MCF 10A (cell line): ENCODE measurements at regions of chr19 and their contacts with region 1.

Region 1: GRCh38 chr19:18865973-18866799 is 29.8 kb downstream of the CERS1 start:
- DNase-seq: peak; percentile 70
- H3K4me3 Mint-ChIP-seq: no peak overlapping the region
- H3K27ac Mint-ChIP-seq: no peak overlapping the region
- H3K4me1 Mint-ChIP-seq: no peaks in the 10 kb centered on the region
- H3K27me3 Mint-ChIP-seq: no peaks in the 10 kb centered on the region
- CTCF ChIP-seq: peak; percentile 97

Region 2: GRCh38 chr19:18771328-18772242 is 94.6 kb before region 1 on chr19:
- CTCF ChIA-PET with region 1: interaction called, 11 read pairs
- POLR2A ChIA-PET with region 1: interaction called, 3 read pairs
- intact Hi-C with region 1: no loop called
- DNase-seq: no peak
- H3K4me3 Mint-ChIP-seq: no peak overlapping the region
- H3K27ac Mint-ChIP-seq: no peak overlapping the region
- H3K4me1 Mint-ChIP-seq: peaks cover 38% of the 10 kb centered on the region
- H3K27me3 Mint-ChIP-seq: no peaks in the 10 kb centered on the region
- CTCF ChIP-seq: no peak

Region 3: DNA sequence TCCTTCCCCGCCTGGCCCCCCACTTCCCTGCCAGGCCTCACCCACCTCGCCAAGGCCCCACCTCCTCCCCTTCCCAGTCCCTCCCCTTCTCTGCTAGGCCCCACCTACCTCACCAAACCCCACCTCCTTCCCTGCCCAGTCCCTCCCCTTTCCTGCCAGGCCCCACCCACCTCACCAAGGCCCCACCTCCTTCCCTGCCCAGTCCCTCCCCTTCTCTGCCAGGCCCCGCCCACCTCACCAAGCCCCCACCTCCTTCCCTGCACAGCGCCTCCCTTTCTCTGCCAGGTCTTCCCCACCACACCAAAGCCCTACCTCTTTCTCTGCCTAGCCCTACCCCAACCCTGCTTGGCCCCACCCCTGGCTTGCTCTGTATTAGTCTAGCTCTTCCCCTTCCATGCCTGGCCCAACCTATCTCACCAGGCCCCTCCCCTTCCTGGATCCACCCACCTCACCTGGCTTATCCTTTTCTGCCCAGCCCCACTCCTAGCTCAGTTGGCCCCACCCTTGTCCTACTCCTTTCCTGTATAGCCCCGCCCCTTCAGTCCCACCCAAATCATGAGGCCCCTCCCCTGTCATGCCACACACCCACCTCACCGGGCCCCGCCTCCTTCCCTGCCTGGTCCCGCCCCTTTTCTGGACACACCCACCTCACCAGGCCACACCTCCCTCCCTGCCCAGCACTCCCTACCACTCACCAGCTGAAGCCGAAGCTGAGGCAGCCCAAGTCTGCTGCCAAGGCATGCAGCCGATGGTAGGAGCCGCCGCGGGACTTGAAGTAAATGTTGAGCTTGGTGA is 13.6 kb after region 1 on chr19:
- CTCF ChIA-PET with region 1: interaction called, 15 read pairs
- POLR2A ChIA-PET with region 1: interaction called, 4 read pairs
- intact Hi-C with region 1: no loop called
- DNase-seq: peak; percentile 47
- H3K4me3 Mint-ChIP-seq: no peak overlapping the region
- H3K27ac Mint-ChIP-seq: no peak overlapping the region
- H3K4me1 Mint-ChIP-seq: peaks cover 10% of the 10 kb centered on the region
- H3K27me3 Mint-ChIP-seq: no peaks in the 10 kb centered on the region
- CTCF ChIP-seq: no peak